Activated CD4-positive, alpha-beta memory T cell treated with anti-CD3 and anti-CD28 coated beads for 36 hours (primary cell): ENCODE measurements at regions of chr20 and their contacts with region 1.

Region 1: GRCh38 chr20:48738399-48739304 is 89.1 kb downstream of the PREX1 start:
- DNase-seq: peak; percentile 91
- H3K4me3 Mint-ChIP-seq: peak overlapping the region; percentile 38
- H3K27ac Mint-ChIP-seq: peak overlapping the region; percentile 92
- H3K4me1 Mint-ChIP-seq: peaks cover 56% of the 10 kb centered on the region
- H3K27me3 Mint-ChIP-seq: no peaks in the 10 kb centered on the region

Region 2: GRCh38 chr20:48648550-48648951 is 90.1 kb before region 1 on chr20:
- CTCF ChIA-PET with region 1: no interaction called
- POLR2A ChIA-PET with region 1: no interaction called
- intact Hi-C with region 1: no loop called
- DNase-seq: no peak
- H3K4me3 Mint-ChIP-seq: no peak overlapping the region
- H3K27ac Mint-ChIP-seq: no peak overlapping the region
- H3K4me1 Mint-ChIP-seq: no peaks in the 10 kb centered on the region
- H3K27me3 Mint-ChIP-seq: no peaks in the 10 kb centered on the region

Region 3: DNA sequence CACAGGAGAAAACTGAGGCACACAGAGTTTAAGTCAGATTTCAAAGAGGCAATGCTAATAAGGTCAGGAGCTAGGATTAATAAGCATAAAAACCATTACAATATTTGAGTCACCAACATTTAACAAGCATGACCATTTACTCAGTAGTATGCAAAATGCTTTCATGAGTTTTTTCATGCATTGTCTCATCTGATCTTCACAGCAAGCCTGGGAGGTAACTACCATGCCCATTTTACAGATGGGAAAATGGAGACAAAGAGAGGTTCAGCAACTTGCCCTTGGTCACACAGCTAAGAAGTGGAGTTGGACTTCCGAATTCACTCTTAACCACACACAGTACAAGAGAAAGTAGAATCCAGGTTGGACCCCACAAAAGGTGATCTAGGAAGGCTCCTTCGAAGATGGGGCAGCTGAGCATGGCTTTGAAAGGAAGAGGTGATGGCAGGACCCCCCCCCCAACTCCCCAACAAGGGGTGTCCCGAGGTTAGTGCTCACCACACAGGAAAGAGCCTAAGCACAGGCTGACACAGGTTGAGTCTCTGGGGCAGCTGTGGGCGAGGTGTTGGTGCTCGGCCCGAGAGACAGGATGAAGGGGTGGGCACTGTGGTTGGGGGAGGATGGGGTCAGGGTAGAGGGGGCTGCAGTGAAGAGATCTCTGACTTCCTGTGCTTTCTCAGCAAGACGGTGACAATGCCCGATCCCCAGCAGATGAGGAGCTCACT is 19.6 kb before region 1 on chr20:
- CTCF ChIA-PET with region 1: interaction called, 5 read pairs
- POLR2A ChIA-PET with region 1: interaction called, 7 read pairs
- intact Hi-C with region 1: loop called (anchors 1 kb)
- DNase-seq: peak; percentile 70
- H3K4me3 Mint-ChIP-seq: peak overlapping the region; percentile 54
- H3K27ac Mint-ChIP-seq: peak overlapping the region; percentile 79
- H3K4me1 Mint-ChIP-seq: peaks cover 88% of the 10 kb centered on the region
- H3K27me3 Mint-ChIP-seq: no peaks in the 10 kb centered on the region

Region 4: GRCh38 chr20:48750947-48751635 is 12.4 kb after region 1 on chr20:
- CTCF ChIA-PET with region 1: interaction called, 10 read pairs
- POLR2A ChIA-PET with region 1: interaction called, 44 read pairs
- intact Hi-C with region 1: loop called (anchors 1 kb)
- DNase-seq: peak; percentile 64
- H3K4me3 Mint-ChIP-seq: peak overlapping the region; percentile 28
- H3K27ac Mint-ChIP-seq: peak overlapping the region; percentile 81
- H3K4me1 Mint-ChIP-seq: peaks cover 71% of the 10 kb centered on the region
- H3K27me3 Mint-ChIP-seq: no peaks in the 10 kb centered on the region

Region 5: DNA sequence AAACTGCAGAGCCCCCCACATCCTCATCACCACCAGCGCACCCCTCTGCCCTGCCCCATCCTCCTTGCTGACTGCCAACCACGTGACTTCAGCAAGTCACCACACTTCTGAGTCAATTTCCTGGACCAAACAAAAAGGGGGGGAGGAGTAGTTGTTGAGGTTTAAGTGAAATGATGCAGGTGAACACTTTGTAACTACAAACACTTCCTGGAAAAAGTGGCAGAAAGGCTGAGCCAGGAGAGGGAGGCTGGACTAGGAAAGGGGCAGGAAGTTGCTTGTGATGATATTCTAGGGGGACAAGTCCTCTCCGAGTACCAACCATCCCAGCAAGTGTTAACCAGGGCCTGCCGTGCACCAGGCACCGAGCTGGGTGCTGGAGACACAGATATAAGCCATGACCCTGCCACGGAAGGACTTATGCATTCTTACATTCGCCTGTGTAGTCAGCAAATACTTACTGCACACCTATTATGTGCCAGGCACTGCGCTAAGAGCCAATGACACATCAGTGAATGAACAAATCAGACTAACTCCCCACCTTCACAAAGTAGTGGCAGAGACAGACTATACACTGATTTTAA is 21.8 kb after region 1 on chr20:
- CTCF ChIA-PET with region 1: interaction called, 5 read pairs
- POLR2A ChIA-PET with region 1: interaction called, 11 read pairs
- intact Hi-C with region 1: loop called (anchors 1 kb)
- DNase-seq: peak; percentile 84
- H3K4me3 Mint-ChIP-seq: peak overlapping the region; percentile 52
- H3K27ac Mint-ChIP-seq: peak overlapping the region; percentile 97
- H3K4me1 Mint-ChIP-seq: peaks cover 86% of the 10 kb centered on the region
- H3K27me3 Mint-ChIP-seq: no peaks in the 10 kb centered on the region

Region 6: DNA sequence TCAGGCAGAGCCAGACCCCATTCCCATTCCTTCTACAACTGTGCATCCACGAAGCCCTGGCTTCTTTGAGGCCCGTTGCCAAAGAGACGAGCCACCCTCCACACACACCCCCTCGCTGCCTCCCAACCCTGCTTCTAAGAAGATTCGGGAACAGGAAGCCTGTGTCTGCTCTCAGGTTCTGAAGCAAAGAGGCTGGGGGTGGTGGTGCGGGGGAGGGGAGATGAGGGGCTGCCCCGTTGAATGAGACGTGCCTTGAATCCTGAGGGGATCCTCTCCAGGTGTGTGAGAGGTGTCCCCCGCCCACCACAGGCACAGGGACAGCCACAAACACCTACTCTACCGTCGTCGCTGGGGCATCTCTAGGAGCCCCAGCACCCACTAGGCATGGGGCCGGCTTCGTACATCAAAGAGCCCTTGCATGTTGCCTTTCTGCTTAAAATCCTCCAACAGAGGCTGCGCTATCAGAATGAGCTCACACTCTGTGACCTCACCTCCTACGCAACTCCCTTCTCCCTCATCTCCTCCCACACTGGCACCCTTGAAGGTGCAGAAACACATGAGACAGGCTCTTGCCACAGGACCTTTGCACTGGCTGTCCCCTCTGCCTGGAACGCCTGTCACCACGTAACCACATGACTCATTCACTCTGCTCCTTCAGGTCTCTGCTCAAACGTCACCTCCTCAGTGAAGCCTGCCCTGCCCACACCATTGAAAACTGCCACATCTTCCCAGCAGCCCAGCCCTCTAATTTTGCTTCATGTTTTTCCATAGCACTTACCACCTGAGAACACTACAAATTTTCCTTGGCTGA is 30.6 kb after region 1 on chr20:
- CTCF ChIA-PET with region 1: interaction called, 4 read pairs
- POLR2A ChIA-PET with region 1: interaction called, 9 read pairs
- intact Hi-C with region 1: loop called (anchors 1 kb)
- DNase-seq: peak; percentile 98
- H3K4me3 Mint-ChIP-seq: peak overlapping the region; percentile 59
- H3K27ac Mint-ChIP-seq: peak overlapping the region; percentile 91
- H3K4me1 Mint-ChIP-seq: peaks cover 93% of the 10 kb centered on the region
- H3K27me3 Mint-ChIP-seq: no peaks in the 10 kb centered on the region

Region 7: DNA sequence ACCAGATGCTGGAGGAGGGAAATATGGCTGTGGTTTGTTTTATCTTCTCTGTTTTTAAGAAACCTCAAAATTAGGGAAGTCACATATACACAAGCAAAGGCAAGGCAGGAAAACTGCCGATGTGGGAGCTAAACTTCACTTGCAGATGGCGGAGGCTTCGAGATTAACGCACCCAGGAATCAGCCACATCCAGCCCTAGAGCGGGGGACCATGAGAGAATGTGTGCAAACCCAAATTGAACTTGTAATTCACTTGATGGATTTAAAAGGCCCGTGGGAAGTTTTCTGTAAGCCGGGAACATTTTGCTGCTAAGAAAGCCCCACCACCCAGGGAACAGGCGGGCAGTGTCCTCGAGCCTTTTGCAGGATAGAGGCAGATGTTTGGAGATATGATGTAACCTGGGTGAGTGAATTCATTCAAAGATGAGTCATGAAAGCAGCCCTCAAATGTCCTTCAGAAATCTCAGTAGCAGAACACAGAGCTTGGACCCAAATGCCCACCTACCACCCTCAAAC is 49.3 kb after region 1 on chr20:
- CTCF ChIA-PET with region 1: interaction called, 4 read pairs
- POLR2A ChIA-PET with region 1: interaction called, 8 read pairs
- intact Hi-C with region 1: loop called (anchors 1 kb)
- DNase-seq: no peak
- H3K4me3 Mint-ChIP-seq: no peak overlapping the region
- H3K27ac Mint-ChIP-seq: peak overlapping the region; percentile 81
- H3K4me1 Mint-ChIP-seq: peaks cover 53% of the 10 kb centered on the region
- H3K27me3 Mint-ChIP-seq: no peaks in the 10 kb centered on the region